ENCODE measurements at regions of chr15 and their contacts with region 1.

Region 1: DNA sequence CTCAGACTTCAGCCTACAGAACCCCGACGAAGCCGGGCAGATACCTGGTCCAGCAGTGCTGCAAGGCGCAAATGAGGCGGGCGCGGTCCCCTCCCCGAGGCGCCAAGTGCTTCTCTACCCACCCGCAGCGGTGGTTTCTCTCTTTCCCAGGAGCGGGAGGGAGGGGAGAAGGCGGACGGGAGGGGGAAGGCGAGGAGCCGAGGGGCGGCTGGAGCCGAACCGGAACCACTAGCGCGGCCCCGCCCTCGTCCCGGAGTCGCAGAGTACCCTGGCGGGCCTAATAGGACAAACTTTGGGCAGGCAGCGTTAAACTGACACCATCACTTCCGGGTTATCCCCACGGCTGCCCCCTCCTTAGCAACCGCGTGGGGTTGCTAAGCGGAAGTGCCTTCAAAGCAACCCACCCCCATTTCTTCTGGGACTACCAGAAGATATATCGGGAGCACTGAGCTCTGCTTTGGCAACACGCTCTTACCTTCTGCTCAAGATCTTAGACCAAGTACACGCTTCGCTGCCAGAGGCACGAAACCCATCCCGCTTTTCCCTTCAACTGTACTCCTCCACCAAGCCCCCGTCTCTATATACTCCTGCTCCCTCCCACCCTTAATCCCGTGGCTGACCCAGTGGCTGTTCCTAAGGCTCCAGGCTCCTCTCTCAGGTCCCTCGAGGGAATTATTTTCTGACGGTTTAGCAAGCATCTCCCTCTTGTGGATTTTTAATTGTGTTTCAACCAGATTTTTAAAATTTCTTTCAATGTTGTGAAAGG is at the start of gene CSNK1G1:
- DNase-seq: peak; percentile 73 to 94 (median 89)
- ATAC-seq: peak; percentile 100
- H3K4me3 ChIP-seq: peak within 1 kb of the TSS; percentile 90
- H3K4me3 Mint-ChIP-seq: peak within 1 kb of the TSS; percentile 90 to 97 (median 92)
- H3K27ac ChIP-seq: peak within 1 kb of the TSS; percentile 73
- H3K27ac Mint-ChIP-seq: peak within 1 kb of the TSS; percentile 78 to 93 (median 92)
- H3K4me1 ChIP-seq: peaks cover 9 to 10% of the 10 kb centered on the region in 2 donors
- H3K4me1 Mint-ChIP-seq: peaks cover 14 to 22% (median 18%) of the 10 kb centered on the region in 7 donors
- H3K27me3 ChIP-seq: no peaks in the 10 kb centered on the region
- H3K27me3 Mint-ChIP-seq: no peaks in the 10 kb centered on the region
- total RNA-seq, gene CSNK1G1: 19.7 to 31.4 (median 26.5) TPM

Region 2: GRCh38 chr15:64209680-64210334 is 146.3 kb before region 1 on chr15:
- CTCF ChIA-PET with region 1: no interaction called
- POLR2A ChIA-PET with region 1: no interaction called
- intact Hi-C with region 1: loop called in 1 of 2 experiments (anchors 1 kb)
- DNase-seq: peak in 3 of 9 donors; percentile 0 to 19 (median 11)
- ATAC-seq: no peak
- H3K4me3 ChIP-seq: no peak overlapping the region
- H3K4me3 Mint-ChIP-seq: no peak overlapping the region
- H3K27ac ChIP-seq: no peak overlapping the region
- H3K27ac Mint-ChIP-seq: peak overlapping the region in 1 of 9 donors; percentile 41
- H3K4me1 ChIP-seq: no peaks in the 10 kb centered on the region
- H3K4me1 Mint-ChIP-seq: peaks cover 0 to 10% (median 0%) of the 10 kb centered on the region in 7 donors
- H3K27me3 ChIP-seq: no peaks in the 10 kb centered on the region
- H3K27me3 Mint-ChIP-seq: no peaks in the 10 kb centered on the region

Region 3: GRCh38 chr15:64381000-64381752 is 25.0 kb after region 1 on chr15 and contains the start of gene PCLAF:
- CTCF ChIA-PET with region 1: no interaction called
- POLR2A ChIA-PET with region 1: interaction called, 3 read pairs
- intact Hi-C with region 1: loop called (anchors 1 kb)
- DNase-seq: peak; percentile 72 to 91 (median 85)
- ATAC-seq: peak; percentile 100
- H3K4me3 ChIP-seq: peak within 1 kb of the TSS; percentile 66
- H3K4me3 Mint-ChIP-seq: peak within 1 kb of the TSS; percentile 79 to 97 (median 94)
- H3K27ac ChIP-seq: peak within 1 kb of the TSS; percentile 57
- H3K27ac Mint-ChIP-seq: peak within 1 kb of the TSS; percentile 11 to 88 (median 60)
- H3K4me1 ChIP-seq: peaks cover 0 to 4% of the 10 kb centered on the region in 2 donors
- H3K4me1 Mint-ChIP-seq: peaks cover 0 to 36% (median 9%) of the 10 kb centered on the region in 7 donors
- H3K27me3 ChIP-seq: no peaks in the 10 kb centered on the region
- H3K27me3 Mint-ChIP-seq: no peaks in the 10 kb centered on the region
- total RNA-seq, gene PCLAF: 0.85 to 58.7 (median 1.2) TPM

Region 4: GRCh38 chr15:64398575-64398974 is 42.4 kb after region 1 on chr15:
- CTCF ChIA-PET with region 1: no interaction called
- POLR2A ChIA-PET with region 1: no interaction called
- intact Hi-C with region 1: no loop called
- DNase-seq: no peak
- ATAC-seq: no peak
- H3K4me3 ChIP-seq: no peak overlapping the region
- H3K4me3 Mint-ChIP-seq: no peak overlapping the region
- H3K27ac ChIP-seq: no peak overlapping the region
- H3K27ac Mint-ChIP-seq: no peak overlapping the region
- H3K4me1 ChIP-seq: no peaks in the 10 kb centered on the region
- H3K4me1 Mint-ChIP-seq: peaks cover 0 to 7% (median 0%) of the 10 kb centered on the region in 7 donors
- H3K27me3 ChIP-seq: no peaks in the 10 kb centered on the region
- H3K27me3 Mint-ChIP-seq: no peaks in the 10 kb centered on the region

Region 5: DNA sequence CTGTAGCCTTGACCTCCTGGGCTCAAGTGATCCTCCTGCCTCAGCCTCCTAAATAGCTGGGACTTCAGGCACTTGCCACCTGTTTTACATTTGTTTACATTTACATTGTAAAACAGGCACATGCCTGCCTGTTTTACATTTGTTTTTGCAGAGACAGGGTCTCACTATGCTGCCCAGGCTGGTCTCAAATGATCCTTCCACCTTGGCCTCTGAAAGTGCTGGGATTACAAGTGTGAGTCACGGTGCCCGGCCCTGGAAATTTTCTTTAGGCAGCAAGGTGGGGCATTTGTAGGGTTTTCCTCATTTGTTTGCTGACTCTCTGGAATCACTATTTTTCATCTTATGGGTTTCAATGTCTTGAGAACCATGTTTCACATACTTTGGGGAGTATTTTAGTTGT is 444.3 kb after region 1 on chr15:
- CTCF ChIA-PET with region 1: no interaction called
- POLR2A ChIA-PET with region 1: no interaction called
- intact Hi-C with region 1: no loop called
- DNase-seq: no peak
- ATAC-seq: no peak
- H3K4me3 ChIP-seq: no peak overlapping the region
- H3K4me3 Mint-ChIP-seq: no peak overlapping the region
- H3K27ac ChIP-seq: no peak overlapping the region
- H3K27ac Mint-ChIP-seq: no peak overlapping the region
- H3K4me1 ChIP-seq: no peaks in the 10 kb centered on the region
- H3K4me1 Mint-ChIP-seq: no peaks in the 10 kb centered on the region
- H3K27me3 ChIP-seq: no peaks in the 10 kb centered on the region
- H3K27me3 Mint-ChIP-seq: peaks cover 0 to 3% (median 0%) of the 10 kb centered on the region in 5 donors

Measured in naive thymus-derived CD4-positive, alpha-beta T cell (primary cell).